ENCODE measurements at regions of chr12 and their contacts with region 1.

Region 1: GRCh38 chr12:68406134-68406594 is 74.0 kb upstream of the MDM1 start:
- DNase-seq: peak; percentile 96

Region 2: DNA sequence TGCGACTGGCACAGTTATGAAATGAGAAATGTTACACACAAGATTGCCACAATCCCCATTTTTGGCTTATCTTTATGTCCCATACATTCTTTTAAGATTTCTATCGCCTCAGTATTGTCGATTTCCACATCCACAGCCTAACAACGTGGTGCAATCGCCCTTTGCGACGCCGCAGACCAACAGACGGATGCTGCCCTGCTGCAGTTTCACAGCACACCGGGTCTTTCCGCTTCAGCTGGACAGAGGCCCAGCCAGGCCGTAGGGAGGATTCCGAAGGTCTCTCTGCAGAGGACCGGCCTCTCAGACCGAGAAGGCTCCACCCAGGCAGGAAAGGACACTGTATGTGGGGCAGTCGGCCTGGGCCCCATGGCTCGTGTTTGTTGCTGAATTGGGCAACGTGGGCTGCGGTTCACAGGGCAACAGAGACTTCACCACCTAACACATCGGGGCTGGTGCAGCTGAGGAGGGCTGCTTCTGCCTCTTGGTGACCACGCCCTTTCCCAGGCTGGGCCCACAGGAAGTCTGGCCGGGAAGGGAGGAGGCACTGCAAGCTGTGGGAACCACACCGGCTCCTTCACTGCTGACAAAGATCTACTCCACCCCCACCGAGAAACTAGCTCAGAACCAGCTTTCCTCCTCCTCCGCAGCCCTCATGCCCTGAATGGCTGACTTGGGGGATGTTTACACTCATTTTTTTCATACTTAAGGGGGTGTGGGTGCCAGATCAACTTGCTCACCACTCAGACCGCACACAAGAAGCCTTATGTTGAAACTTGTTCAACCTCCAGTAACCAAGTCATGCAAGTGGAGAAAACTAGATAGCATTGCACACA is 41.1 kb before region 1 on chr12:
- intact Hi-C with region 1: loop called in 1 of 2 experiments (anchors 5 kb)
- DNase-seq: peak; percentile 97

Region 3: DNA sequence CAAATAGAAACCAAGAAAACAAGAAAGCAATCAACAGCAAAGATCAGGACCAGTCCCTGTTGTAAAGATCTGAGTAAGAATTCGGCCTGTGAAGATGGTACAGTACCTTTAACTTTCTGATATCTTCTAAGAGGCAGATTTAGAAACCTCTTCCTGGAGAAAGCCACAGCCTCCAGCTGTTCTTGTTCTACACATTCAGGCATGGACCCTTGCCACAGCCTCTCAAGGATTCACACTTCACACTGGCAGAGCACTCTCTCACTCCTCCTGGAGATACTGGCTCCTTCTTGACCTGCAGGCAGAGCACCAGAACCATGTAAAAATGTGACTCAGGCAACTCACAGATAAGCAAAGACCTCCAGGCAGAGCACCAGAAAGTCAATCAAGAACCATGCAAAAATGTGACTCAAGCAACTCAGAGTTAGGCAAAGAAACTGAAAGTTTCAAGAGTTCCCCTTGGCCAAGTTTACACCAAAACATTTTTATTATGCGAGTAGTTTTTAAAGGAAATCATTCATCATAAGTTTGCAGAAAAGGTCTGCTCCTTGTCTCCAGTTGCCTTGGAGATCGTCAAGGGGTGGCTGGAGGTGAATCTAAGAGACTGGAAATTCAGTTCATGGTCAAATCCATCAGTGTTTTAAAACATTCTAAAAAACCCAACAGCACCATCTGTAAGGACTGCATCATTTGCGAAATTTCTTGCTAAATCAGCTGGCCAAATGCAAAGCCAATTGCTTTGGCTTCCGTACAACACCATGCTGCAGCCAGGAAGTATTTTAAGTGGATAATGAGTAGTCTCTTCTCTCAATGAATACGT is 45.3 kb after region 1 on chr12:
- intact Hi-C with region 1: no loop called
- DNase-seq: no peak

Measured in posterior vena cava (tissue), 2 donors.